Ascending aorta (tissue), 2 donors: ENCODE measurements at regions of chr14 and their contacts with region 1.

Region 1: DNA sequence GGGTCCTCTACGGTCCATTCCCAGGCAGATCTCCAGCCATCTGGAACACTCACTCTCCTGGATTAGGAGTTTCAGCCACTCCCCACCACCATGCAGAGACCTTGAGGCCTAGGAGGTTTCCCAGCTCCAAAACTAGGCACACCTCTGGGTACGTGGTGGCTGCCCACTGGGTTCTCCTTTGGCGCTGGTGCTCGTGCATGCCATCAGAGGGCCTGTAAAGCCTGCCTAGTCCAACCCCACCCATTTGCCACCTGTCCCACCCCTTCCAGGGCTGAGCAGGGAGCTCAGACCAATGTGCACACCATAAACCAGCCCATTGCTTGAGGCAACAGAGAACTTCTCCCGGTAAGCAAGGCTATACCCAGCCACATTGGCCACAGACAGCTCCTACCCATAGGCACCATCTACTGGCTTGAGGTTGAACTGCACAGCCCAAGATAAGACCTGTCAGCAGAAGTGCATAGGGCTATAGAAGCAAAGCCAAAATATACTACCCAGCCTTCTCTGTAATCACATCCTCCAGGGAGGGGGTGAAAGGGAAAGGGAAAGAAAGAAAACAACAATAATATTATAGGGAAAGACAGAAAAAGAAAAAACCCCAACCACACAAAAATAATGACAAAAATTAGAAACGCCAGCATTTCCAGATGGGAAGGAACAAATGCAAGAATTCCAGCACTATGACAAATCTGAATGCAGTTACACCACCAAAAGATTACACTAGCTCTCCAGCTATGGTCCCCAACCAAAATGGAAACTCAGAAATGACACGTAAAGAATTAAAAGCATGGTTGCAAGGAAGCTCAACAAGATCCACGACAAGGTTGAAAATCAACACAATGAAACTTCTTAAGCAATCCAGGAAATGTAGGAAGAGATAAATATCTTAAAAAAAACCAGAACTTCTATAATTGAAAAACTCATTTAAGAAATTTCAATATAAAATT is 111.9 kb upstream of the CCDC175 start:
- DNase-seq: peak in 1 of 2 donors; percentile 83
- H3K4me3 ChIP-seq: no peak overlapping the region
- H3K27ac ChIP-seq: no peak overlapping the region
- H3K4me1 ChIP-seq: peaks cover 0 to 4% of the 10 kb centered on the region in 2 donors
- H3K27me3 ChIP-seq: no peaks in the 10 kb centered on the region
- CTCF ChIP-seq: peak; percentile 57 to 81 (median 79)

Region 2: GRCh38 chr14:59507063-59507780 is 181.3 kb before region 1 on chr14:
- intact Hi-C with region 1: loop called (anchors 5 kb)
- DNase-seq: peak in 1 of 2 donors; percentile 69
- H3K4me3 ChIP-seq: no peak overlapping the region
- H3K27ac ChIP-seq: no peak overlapping the region
- H3K4me1 ChIP-seq: no peaks in the 10 kb centered on the region
- H3K27me3 ChIP-seq: no peaks in the 10 kb centered on the region
- CTCF ChIP-seq: peak; percentile 60 to 83 (median 80)

Region 3: GRCh38 chr14:59576332-59577294 is 111.9 kb before region 1 on chr14 and contains the start of gene CCDC175:
- intact Hi-C with region 1: loop called (anchors 2 kb)
- DNase-seq: peak; percentile 40 to 87
- H3K4me3 ChIP-seq: peak within 1 kb of the TSS; percentile 42 to 65
- H3K27ac ChIP-seq: no peak within 1 kb of the TSS
- H3K4me1 ChIP-seq: no peaks in the 10 kb centered on the region
- H3K27me3 ChIP-seq: no peaks in the 10 kb centered on the region
- CTCF ChIP-seq: peak; percentile 41 to 64 (median 56)
- total RNA-seq, gene CCDC175: not detected

Region 4: GRCh38 chr14:59632381-59632780 is 56.1 kb before region 1 on chr14:
- intact Hi-C with region 1: loop called (anchors 1 kb)
- DNase-seq: no peak
- H3K4me3 ChIP-seq: no peak overlapping the region
- H3K27ac ChIP-seq: peak overlapping the region in 1 of 2 donors; percentile 50
- H3K4me1 ChIP-seq: peaks cover 0 to 9% of the 10 kb centered on the region in 2 donors
- H3K27me3 ChIP-seq: no peaks in the 10 kb centered on the region
- CTCF ChIP-seq: peak; percentile 12 to 54 (median 22)